Activated T-helper 2 cell treated with anti-CD3 and anti-CD28 coated beads, Interferon-gamma antibody, Interleukin-2, Interleukin-4, amounts not matched to agents 10 μg/mL and 5 μg/mL and 100 μg/mL, durations not matched to agents 14 hours and 24 hours and 36 hours (primary cell): ENCODE measurements at regions of chr5 and their contacts with region 1.

Region 1: GRCh38 chr5:98773464-98774191 is at the start of gene RGMB:
- DNase-seq: peak; percentile 77
- H3K4me3 Mint-ChIP-seq: peak within 1 kb of the TSS; percentile 79
- H3K27ac Mint-ChIP-seq: no peak within 1 kb of the TSS
- H3K4me1 Mint-ChIP-seq: peaks cover 40% of the 10 kb centered on the region
- H3K27me3 Mint-ChIP-seq: peaks cover 80% of the 10 kb centered on the region
- total RNA-seq, gene RGMB: 0.18 and 0.39 TPM in 2 replicates

Region 2: DNA sequence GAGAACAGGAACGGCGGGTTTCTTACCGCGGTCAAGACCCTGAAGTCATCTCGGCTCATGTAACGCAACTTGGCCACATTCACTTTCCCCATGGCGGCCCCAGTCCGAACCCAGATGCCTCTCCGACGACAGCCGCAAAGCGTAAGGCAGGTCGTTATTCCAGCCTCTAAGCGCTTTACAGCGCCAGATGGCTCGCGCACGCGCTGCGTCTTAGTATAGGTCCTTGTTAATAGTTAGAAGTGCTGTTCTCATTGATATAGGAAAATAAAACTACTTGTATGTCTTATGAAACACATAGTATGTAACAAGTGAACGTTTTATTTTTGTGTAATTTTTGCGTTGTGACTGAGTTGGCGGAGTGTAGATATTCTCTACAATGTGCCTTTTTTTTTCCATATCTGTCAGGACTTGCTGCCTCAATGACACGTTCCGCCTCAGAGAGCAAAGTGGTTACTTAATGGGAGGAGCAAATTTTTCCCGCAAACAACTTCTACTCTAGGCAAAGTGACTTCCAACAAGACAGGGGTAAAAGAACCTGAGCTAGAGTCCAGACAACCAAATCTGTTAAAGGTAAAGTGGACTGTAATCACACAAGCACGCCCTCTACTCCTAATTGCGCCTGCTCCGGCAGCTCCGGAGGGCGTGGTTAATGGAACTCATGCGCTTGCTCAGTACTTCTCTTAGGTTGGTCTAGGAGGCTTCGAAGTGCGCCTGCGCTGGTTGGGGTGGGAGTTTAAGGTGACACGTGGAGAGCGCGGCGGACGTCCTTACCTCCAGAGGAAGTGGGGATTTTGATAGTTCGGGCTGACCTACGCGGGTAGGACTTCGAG is 1590.3 kb before region 1 on chr5 and contains the start of gene RIOK2:
- intact Hi-C with region 1: loop called (anchors 5 kb)
- DNase-seq: peak; percentile 89
- H3K4me3 Mint-ChIP-seq: peak within 1 kb of the TSS; percentile 89
- H3K27ac Mint-ChIP-seq: peak within 1 kb of the TSS; percentile 100
- H3K4me1 Mint-ChIP-seq: peaks cover 24% of the 10 kb centered on the region
- H3K27me3 Mint-ChIP-seq: peaks cover 9% of the 10 kb centered on the region
- total RNA-seq, gene RIOK2: 28.1 and 30.5 TPM in 2 replicates

Region 3: DNA sequence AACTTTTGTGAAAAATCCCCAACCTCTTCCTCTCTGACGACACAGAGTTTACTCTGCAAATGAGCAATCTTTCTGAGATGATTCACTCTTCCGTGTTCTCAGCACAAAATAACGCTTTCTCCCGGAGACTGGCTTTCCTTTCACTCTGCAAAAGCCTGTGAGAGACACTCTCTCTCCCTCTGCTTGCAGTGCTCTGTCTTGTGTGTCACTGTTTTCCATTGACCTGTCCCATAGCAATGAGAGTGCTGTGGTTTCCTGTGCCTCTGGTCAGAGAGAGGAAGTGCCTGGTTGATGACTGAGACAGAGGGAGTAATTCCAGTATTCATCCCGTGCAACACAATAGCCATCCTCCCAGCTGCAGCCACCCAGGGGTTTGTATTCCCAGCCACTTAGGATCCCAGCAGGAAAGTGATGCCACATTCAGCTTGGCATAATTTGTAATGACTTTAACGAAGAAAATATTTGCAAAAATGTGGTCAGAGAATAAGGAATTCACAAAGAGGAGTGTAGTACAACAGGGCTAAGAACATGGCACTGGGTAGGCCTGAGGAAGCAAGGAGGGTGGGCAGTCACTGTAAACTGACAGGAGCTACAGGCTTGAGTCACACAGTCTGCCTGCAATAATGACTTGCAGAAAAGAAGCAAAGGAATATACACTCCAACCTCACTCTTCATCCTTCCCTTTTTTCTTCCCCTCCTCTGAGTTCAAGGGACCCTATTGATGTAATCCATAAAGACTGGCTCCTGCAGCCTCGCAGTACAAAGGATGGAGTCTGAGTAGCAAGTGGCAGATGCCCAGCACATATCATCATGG is 463.6 kb before region 1 on chr5:
- intact Hi-C with region 1: loop called (anchors 5 kb)
- DNase-seq: peak; percentile 8
- H3K4me3 Mint-ChIP-seq: no peak overlapping the region
- H3K27ac Mint-ChIP-seq: peak overlapping the region; percentile 15
- H3K4me1 Mint-ChIP-seq: peaks cover 15% of the 10 kb centered on the region
- H3K27me3 Mint-ChIP-seq: peaks cover 2% of the 10 kb centered on the region

Region 4: DNA sequence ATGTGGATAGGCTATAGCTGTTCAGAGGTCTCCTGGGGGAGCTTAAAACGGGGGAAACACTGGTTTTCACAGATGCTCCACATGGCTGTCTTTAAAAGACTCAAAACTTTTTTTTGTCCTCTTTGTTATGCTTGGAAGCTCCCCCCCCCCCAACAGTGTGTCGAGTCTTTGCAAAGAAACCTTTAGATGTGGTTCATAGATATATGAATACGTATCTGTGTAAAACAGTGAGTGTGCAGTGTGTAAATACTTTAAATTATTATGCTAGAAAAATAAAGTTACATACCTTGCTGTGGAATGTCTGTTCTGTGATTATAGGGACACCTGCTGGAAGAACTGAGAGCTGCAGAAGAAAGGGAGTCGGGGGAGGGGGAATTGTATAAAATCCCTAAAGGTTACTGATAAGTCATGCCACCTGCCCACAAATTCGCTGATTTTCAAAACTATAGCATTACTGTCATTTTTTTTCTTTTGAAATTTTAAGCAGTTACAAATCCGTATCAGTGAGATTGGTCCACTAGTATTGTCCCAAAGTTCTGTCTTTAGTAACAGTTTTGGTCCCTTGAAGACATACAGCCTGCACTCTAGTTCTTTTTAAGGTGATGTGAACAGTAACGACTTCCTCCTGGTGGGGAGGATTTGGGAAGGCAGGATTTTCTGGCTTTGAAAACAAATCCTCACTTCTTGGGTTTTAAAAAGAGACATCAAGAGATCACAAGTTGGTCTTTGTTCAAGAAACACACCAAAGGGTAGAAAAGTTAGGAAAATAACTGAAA is 22.8 kb after region 1 on chr5:
- intact Hi-C with region 1: loop called (anchors 1 kb)
- DNase-seq: no peak
- H3K4me3 Mint-ChIP-seq: no peak overlapping the region
- H3K27ac Mint-ChIP-seq: no peak overlapping the region
- H3K4me1 Mint-ChIP-seq: no peaks in the 10 kb centered on the region
- H3K27me3 Mint-ChIP-seq: peaks cover 6% of the 10 kb centered on the region

Region 5: GRCh38 chr5:98872674-98873073 is 99.0 kb after region 1 on chr5:
- intact Hi-C with region 1: loop called (anchors 10 kb)
- DNase-seq: no peak
- H3K4me3 Mint-ChIP-seq: no peak overlapping the region
- H3K27ac Mint-ChIP-seq: no peak overlapping the region
- H3K4me1 Mint-ChIP-seq: peaks cover 11% of the 10 kb centered on the region
- H3K27me3 Mint-ChIP-seq: no peaks in the 10 kb centered on the region

Region 6: GRCh38 chr5:98928873-98929696 is 155.5 kb after region 1 on chr5 and contains the start of gene CHD1:
- intact Hi-C with region 1: loop called (anchors 2 kb)
- DNase-seq: peak; percentile 92
- H3K4me3 Mint-ChIP-seq: peak within 1 kb of the TSS; percentile 98
- H3K27ac Mint-ChIP-seq: peak within 1 kb of the TSS; percentile 99
- H3K4me1 Mint-ChIP-seq: peaks cover 41% of the 10 kb centered on the region
- H3K27me3 Mint-ChIP-seq: no peaks in the 10 kb centered on the region
- total RNA-seq, gene CHD1: 67.6 and 72.1 TPM in 2 replicates

Region 7: GRCh38 chr5:99032234-99033013 is 258.8 kb after region 1 on chr5:
- intact Hi-C with region 1: loop called (anchors 10 kb)
- DNase-seq: no peak
- H3K4me3 Mint-ChIP-seq: peak overlapping the region; percentile 77
- H3K27ac Mint-ChIP-seq: peak overlapping the region; percentile 82
- H3K4me1 Mint-ChIP-seq: peaks cover 69% of the 10 kb centered on the region
- H3K27me3 Mint-ChIP-seq: no peaks in the 10 kb centered on the region